ENCODE measurements at regions of chr10 and their contacts with region 1.

Region 1: DNA sequence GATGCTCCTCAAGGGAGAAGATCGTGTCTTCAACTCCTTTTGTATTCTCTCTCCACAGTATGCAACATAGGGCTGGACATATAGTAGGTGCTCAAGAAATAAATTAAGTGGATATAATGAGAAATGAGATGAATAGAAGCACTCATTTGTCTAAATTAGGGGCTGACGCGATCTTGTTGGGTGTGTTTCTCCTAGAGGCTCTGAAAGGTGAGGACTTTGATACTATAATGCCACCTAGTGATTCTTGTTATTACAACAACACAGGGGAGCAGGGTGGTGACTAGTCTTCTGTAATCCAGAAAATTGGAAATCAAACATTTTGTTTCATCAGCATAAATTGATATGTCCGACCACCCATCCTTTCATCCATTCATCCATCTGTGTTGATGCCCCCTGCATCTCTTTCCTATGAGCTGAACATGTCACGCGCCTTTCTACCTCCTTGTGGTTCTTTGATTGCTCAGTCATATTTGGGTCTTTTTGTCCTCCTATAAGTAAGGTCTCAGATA is 3.5 kb upstream of the CFAP58 start:
- DNase-seq: peak; percentile 72
- ATAC-seq: peak; percentile 71
- H3K4me3 ChIP-seq: peak overlapping the region; percentile 59
- H3K27ac ChIP-seq: peak overlapping the region; percentile 92
- H3K4me1 ChIP-seq: peaks cover 41% of the 10 kb centered on the region
- H3K27me3 ChIP-seq: 0 out of 2 replicates have a peak, but pooled peaks cover 5% of the 10 kb centered on the region
- CTCF ChIP-seq: peak; percentile 81

Region 2: GRCh38 chr10:102998005-102998404 is 1352.2 kb before region 1 on chr10:
- CTCF ChIA-PET with region 1: no interaction called
- POLR2A ChIA-PET with region 1: interaction called, 12 read pairs
- intact Hi-C with region 1: no loop called
- DNase-seq: peak; percentile 77
- ATAC-seq: peak; percentile 97
- H3K4me3 ChIP-seq: peak overlapping the region; percentile 32; the same call in 1 of the 2 replicates
- H3K27ac ChIP-seq: peak overlapping the region; percentile 55
- H3K4me1 ChIP-seq: peaks cover 20% of the 10 kb centered on the region
- H3K27me3 ChIP-seq: no peaks in the 10 kb centered on the region
- CTCF ChIP-seq: no peak

Region 3: DNA sequence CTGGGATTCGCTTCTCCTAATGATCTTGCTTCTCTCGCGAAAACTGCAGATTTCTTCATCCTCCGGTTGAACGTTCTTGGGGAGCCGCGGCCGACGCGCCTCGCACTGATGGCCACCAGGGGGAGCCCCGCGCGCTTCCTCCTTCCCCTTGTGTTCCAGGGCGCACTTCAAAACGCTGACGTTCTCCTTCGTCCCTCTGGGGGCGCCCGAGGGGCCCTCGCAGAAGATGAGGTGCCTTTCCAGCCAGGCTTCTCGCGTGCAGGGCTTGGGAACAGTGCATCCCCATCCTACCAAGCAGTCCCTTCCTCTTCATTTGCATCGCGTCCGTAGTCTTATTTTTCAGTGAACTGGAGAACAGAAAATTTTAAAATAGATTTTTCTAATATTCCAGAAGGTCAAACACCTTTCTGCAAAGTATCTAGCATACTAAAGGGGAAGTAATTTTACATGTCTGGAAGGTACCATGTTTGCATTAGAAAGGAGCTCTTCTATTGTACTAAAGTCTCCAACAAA is 58.7 kb before region 1 on chr10:
- CTCF ChIA-PET with region 1: interaction called, 9 read pairs
- POLR2A ChIA-PET with region 1: interaction called, 3 read pairs
- intact Hi-C with region 1: loop called (anchors 1 kb)
- DNase-seq: peak; percentile 79
- ATAC-seq: peak; percentile 71
- H3K4me3 ChIP-seq: no peak overlapping the region
- H3K27ac ChIP-seq: no peak overlapping the region
- H3K4me1 ChIP-seq: peaks cover 24% of the 10 kb centered on the region
- H3K27me3 ChIP-seq: no peaks in the 10 kb centered on the region
- CTCF ChIP-seq: peak; percentile 98

Region 4: GRCh38 chr10:104300736-104301292 is 49.4 kb before region 1 on chr10:
- CTCF ChIA-PET with region 1: interaction called, 15 read pairs
- POLR2A ChIA-PET with region 1: no interaction called
- intact Hi-C with region 1: loop called (anchors 1 kb)
- DNase-seq: peak; percentile 79
- ATAC-seq: peak; percentile 82
- H3K4me3 ChIP-seq: no peak overlapping the region
- H3K27ac ChIP-seq: peak overlapping the region; percentile 94
- H3K4me1 ChIP-seq: peaks cover 29% of the 10 kb centered on the region
- H3K27me3 ChIP-seq: no peaks in the 10 kb centered on the region
- CTCF ChIP-seq: peak; percentile 41; the same call in 1 of the 2 replicates

Region 5: DNA sequence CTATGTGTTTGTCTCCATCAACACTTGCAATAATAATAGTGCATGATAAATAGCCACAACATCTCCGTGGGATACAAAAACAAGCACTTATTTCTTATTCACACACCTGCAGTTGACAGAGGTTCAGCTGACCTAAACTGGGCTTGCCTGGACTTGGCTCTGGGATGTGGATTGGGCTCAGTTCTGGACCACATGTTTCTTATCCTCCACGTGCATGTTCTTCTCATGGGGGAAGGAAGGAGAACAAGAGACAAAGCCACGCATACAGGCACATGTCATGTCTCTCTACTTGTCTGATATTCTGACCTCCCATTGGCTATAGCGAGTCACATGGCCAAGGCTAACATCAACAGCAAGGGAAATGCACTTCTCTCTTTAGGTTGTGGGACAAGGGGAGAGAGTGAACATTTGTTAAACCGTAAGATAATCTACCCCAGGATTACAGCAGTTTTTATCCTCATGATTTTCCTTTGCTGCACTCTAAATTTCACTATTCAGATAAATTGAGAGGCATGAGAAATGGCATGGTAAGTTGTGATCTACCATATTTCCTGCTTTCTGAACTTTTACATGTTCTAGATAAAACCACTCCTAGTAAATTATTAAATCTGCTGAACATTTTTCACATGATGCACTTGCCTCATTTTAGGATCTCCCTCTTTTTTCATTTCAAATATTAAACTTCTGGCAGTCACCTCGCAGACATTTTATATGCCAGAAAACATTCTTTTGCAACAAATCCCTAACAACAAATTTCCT is 37.1 kb after region 1 on chr10:
- CTCF ChIA-PET with region 1: no interaction called
- POLR2A ChIA-PET with region 1: no interaction called
- intact Hi-C with region 1: no loop called
- DNase-seq: no peak
- ATAC-seq: no peak
- H3K4me3 ChIP-seq: no peak overlapping the region
- H3K27ac ChIP-seq: no peak overlapping the region
- H3K4me1 ChIP-seq: peaks cover 6% of the 10 kb centered on the region; the same call in 1 of the 2 replicates
- H3K27me3 ChIP-seq: peaks cover 46% of the 10 kb centered on the region
- CTCF ChIP-seq: no peak